ENCODE measurements at regions of chr11 and their contacts with region 1.

Region 1: GRCh38 chr11:62880803-62881578 is at the start of gene SLC3A2:
- DNase-seq: peak; percentile 93 to 96
- ATAC-seq: peak; percentile 94
- H3K4me3 ChIP-seq: peak within 1 kb of the TSS; percentile 53 to 90
- H3K27ac ChIP-seq: peak within 1 kb of the TSS; percentile 68 to 98
- H3K4me1 ChIP-seq: peaks cover 0 to 9% of the 10 kb centered on the region in 2 donors
- H3K27me3 ChIP-seq: no peaks in the 10 kb centered on the region
- total RNA-seq, gene SLC3A2: 98.6 to 107 TPM

Region 2: GRCh38 chr11:62787005-62787759 is 93.8 kb before region 1 on chr11 and contains the start of gene TMEM179B:
- intact Hi-C with region 1: loop called in 1 of 2 experiments (anchors 5 kb)
- DNase-seq: peak; percentile 99
- ATAC-seq: peak; percentile 95
- H3K4me3 ChIP-seq: peak within 1 kb of the TSS; percentile 78 to 96
- H3K27ac ChIP-seq: peak within 1 kb of the TSS; percentile 72 to 85
- H3K4me1 ChIP-seq: no peaks in the 10 kb centered on the region
- H3K27me3 ChIP-seq: no peaks in the 10 kb centered on the region
- total RNA-seq, gene TMEM179B: 26.8 to 31.0 TPM

Region 3: DNA sequence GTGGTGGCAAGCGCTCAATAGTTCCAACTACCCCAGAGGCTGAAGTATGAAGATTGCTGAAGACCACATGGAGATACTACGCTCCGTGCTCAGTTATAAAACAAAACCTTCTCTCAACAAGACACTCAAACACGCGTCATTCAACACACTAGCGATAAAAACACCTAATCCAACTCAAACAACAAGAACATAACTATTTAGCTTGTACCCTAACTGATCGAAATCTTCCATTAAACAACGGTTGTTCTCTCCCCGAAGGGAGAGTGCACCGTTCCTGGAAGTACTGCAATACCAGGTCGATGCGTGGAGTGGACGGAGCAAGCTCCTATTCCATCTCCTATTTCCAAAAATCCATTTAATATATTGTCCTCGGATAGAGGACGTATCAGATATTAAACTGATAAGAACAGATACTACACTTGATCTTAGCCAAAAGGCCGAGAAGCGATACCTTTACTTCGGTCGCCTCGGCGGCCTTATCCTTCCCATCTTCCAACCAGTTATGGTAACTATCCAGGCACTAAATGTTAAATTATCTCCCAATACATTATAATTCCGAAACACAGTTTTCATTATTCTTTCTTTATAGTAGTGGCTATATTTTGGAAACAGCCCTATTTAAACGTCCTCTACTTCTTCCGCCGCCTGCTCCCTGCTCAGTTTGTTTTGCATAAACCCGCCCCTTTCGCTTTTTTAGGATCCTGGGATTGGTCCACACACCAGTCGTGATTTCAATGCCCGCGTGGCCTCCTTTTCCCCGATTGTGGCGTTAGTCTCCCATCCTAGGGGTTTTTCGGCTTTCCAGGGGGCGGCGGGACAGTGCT is 39.4 kb before region 1 on chr11:
- intact Hi-C with region 1: loop called in 1 of 2 experiments (anchors 1 kb)
- DNase-seq: peak; percentile 89 to 90
- ATAC-seq: peak; percentile 85
- H3K4me3 ChIP-seq: peak overlapping the region; percentile 42 to 51
- H3K27ac ChIP-seq: peak overlapping the region; percentile 76 to 99
- H3K4me1 ChIP-seq: peaks cover 0 to 3% of the 10 kb centered on the region in 2 donors
- H3K27me3 ChIP-seq: peaks cover 0 to 1% of the 10 kb centered on the region in 2 donors

Region 4: DNA sequence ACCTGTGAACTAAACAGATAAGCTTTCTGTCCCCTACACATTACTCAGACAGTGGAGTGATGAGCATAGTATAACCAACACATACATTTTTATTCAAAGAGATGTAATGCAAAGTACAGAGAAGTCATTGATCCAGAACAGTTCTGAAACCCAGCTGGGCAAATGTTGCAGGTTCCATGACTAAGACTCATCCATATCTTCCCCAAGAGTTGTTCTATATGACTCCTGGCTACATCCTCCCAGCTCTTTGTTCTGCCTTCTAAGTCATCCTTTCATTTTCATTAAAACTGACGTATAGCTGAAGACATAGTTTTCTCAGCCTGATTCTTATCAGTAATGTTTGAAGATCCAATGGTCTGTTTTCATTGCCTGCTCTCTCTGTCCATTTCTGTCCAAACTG is 562.7 kb after region 1 on chr11:
- intact Hi-C with region 1: no loop called
- DNase-seq: no peak
- ATAC-seq: no peak
- H3K4me3 ChIP-seq: no peak overlapping the region
- H3K27ac ChIP-seq: no peak overlapping the region
- H3K4me1 ChIP-seq: no peaks in the 10 kb centered on the region
- H3K27me3 ChIP-seq: no peaks in the 10 kb centered on the region

Region 5: DNA sequence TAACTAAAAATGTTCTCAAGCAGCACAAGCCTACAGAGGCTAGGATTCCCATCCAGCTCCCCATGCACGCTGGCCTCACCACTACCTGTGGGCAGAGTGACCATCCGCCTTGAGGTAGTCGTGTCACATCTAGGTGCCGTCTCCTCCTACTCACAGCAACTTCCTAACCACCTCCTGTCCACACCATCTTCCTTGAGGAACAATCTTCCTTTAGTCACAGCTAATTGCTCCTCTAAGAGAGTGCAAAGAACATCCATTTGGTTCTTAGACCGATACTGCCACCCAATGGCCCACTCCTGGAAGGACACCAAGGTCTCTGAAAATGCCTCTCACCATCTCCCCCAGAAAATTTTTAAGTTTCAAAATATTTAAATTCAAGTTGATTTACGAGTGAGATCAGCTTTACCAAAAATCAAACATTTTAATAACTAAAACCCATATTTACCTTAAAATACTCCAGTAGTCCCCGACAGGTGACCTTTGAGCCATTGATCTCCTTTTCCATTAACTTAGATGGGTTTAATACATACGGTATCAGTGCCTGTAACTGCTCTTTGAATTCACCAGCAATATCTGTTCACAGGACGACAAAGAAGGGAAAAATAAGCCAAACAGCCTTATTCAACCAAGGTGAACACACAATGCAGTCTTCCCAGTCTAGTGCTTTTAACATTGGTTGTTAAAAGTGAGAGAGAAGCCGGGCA is 754.9 kb after region 1 on chr11:
- intact Hi-C with region 1: loop called in 1 of 2 experiments (anchors 10 kb)
- DNase-seq: peak in 1 of 2 donors; percentile 59
- ATAC-seq: peak; percentile 87
- H3K4me3 ChIP-seq: no peak overlapping the region
- H3K27ac ChIP-seq: no peak overlapping the region
- H3K4me1 ChIP-seq: no peaks in the 10 kb centered on the region
- H3K27me3 ChIP-seq: no peaks in the 10 kb centered on the region

Measured in aorta (tissue), 5 donors.